CD4-positive, alpha-beta T cell (primary cell): ENCODE measurements at regions of chr17 and their contacts with region 1.

Region 1: GRCh38 chr17:81484195-81484979 is 28.2 kb downstream of the ACTG1 start:
- DNase-seq: peak; percentile 74 to 91 (median 86)
- ATAC-seq: peak; percentile 73
- H3K4me3 ChIP-seq: peak overlapping the region; percentile 39
- H3K4me3 Mint-ChIP-seq: no peak overlapping the region
- H3K27ac ChIP-seq: no peak overlapping the region
- H3K27ac Mint-ChIP-seq: no peak overlapping the region
- H3K4me1 ChIP-seq: peaks cover 55% of the 10 kb centered on the region
- H3K4me1 Mint-ChIP-seq: peaks cover 7% of the 10 kb centered on the region
- H3K27me3 ChIP-seq: peaks cover 25 to 31% of the 10 kb centered on the region in 2 experiments
- H3K27me3 Mint-ChIP-seq: peaks cover 24% of the 10 kb centered on the region
- CTCF ChIP-seq: peak; percentile 96

Region 2: DNA sequence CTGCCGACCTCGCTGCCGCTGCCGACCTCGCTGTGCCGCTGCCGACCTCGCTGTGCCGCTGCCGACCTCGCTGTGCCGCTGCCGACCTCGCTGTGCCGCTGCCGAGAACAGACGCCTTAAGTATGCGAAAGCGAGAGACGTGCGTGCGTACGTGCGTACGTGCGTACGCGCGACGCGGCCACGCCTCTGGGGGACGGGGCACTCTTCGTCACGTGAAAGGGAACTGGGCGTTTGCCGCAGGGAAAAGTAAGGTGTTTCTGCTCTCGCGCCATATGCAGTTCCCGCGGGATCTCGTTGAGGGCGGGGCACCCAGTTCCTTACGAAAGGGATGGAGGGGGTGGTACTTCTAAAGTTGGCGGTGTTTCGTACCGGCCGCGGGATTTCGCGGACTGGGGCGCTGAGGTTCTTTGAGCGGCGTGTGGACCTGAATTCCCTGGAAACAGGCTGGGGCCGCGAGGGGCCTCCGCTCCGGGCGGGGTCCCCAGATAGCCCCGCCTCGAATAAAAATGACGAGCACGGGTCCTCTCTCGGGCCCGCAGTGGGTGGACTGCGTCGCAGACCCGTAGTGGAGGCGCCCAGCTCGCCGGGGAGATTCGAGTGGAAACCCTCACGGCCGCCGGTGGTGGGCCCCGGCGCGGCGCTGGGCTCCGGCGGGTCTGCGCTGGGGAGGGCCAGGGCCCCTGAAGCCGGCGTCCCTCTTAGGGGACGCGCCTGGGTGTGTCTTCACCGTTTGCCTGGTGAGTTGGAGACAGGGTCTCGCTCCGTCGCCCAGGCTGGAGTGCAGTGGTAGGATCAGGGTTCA is 1337.2 kb before region 1 on chr17 and contains the start of gene EIF4A3:
- CTCF ChIA-PET with region 1: no interaction called
- POLR2A ChIA-PET with region 1: no interaction called
- intact Hi-C with region 1: loop called in 1 of 2 experiments (anchors 10 kb)
- DNase-seq: peak; percentile 91 to 100 (median 95)
- ATAC-seq: peak; percentile 90
- H3K4me3 ChIP-seq: peak within 1 kb of the TSS; percentile 95
- H3K4me3 Mint-ChIP-seq: peak within 1 kb of the TSS; percentile 99
- H3K27ac ChIP-seq: peak within 1 kb of the TSS; percentile 84 to 93
- H3K27ac Mint-ChIP-seq: peak within 1 kb of the TSS; percentile 95
- H3K4me1 ChIP-seq: peaks cover 45% of the 10 kb centered on the region
- H3K4me1 Mint-ChIP-seq: peaks cover 49% of the 10 kb centered on the region
- H3K27me3 ChIP-seq: no peaks in the 10 kb centered on the region
- H3K27me3 Mint-ChIP-seq: no peaks in the 10 kb centered on the region
- CTCF ChIP-seq: no peak
- total RNA-seq, gene EIF4A3: 79.6 to 79.7 TPM

Region 3: DNA sequence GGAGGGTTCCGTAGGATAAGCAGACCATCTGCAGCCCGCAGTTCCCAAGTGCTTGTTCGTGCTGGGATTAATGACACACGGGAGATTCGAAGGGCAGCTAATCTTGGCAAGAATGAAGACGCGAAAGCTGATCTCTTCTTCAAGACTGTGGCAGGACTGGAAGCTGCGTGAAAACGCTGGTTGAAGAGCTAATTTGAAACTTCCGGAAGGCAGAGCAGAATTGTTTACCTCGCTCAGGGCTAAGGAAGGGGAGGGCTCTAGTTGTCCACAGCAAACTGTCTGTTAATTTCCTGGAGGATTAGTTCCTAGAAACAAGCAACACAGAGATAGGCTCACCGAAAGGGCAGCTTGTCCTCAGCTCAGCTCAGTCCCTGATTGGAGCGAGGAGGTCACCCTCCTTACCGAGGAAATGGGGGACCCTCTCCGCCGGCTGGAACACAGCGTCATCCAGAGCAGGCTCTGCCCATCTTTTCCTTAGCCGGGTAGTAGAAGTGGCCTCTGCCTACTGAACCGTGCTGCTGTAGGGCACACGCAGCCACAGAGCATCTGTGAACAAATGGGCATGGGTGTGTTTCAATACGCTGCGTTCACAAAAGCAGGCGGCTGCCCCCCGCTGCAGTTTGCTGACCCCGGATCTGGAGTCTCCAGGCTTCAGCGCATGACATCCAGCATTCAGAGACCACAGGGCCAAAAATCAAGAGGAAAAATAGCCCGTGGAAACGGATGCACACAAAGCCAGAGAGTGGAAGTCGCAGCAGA is 466.2 kb before region 1 on chr17:
- CTCF ChIA-PET with region 1: no interaction called
- POLR2A ChIA-PET with region 1: no interaction called
- intact Hi-C with region 1: loop called in 1 of 2 experiments (anchors 10 kb)
- DNase-seq: peak in 12 of 14 experiments; percentile 22 to 73 (median 38)
- ATAC-seq: peak; percentile 88
- H3K4me3 ChIP-seq: peak overlapping the region; percentile 60
- H3K4me3 Mint-ChIP-seq: peak overlapping the region; percentile 84
- H3K27ac ChIP-seq: peak overlapping the region; percentile 56 to 81
- H3K27ac Mint-ChIP-seq: peak overlapping the region; percentile 93
- H3K4me1 ChIP-seq: peaks cover 34% of the 10 kb centered on the region
- H3K4me1 Mint-ChIP-seq: peaks cover 26% of the 10 kb centered on the region
- H3K27me3 ChIP-seq: no peaks in the 10 kb centered on the region
- H3K27me3 Mint-ChIP-seq: no peaks in the 10 kb centered on the region
- CTCF ChIP-seq: no peak

Region 4: DNA sequence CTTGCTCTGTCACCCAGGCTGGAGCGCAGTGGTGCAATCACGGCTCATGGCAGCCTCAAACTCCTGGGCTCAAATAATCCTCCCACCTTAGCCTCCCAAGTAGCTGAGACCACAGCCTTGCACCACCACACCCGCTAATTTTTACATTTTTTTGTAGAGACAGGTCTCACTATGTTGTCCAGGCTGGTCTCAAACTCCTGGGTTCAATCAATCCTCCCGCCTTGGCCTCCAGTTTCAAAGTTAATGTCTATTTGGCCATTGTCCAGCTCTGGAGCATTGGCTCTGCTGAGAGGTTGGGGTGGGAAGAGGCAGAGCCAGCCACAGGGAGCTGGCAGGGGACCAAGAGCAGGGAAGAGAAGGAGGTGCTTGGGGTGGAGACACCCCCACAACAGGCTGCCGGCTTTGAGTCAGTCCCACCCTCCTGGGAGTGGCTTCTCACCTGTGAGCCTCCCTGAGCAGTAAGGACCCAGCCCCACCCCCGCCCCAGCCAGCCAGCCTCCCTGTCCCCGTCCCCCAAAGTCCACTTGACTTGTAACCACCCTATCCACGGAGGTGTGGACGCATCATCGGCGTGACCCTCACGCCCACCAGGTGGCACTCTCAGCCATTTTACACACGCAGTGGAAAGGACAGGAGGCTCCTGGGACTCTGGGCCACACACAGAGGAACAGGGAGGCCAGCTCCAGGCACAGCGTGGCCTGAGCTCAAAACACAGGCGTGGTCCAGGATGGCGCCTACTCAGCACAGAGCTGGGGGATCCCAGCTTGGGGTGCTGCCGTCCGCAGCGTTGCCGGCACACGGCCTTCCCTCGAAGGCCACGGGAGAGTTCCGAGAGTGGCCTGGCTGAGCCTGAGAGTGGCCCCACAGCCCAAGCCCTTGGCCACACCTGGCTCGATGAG is 341.8 kb before region 1 on chr17:
- CTCF ChIA-PET with region 1: no interaction called
- POLR2A ChIA-PET with region 1: no interaction called
- intact Hi-C with region 1: loop called in 1 of 2 experiments (anchors 1 kb)
- DNase-seq: peak; percentile 35 to 78 (median 56)
- ATAC-seq: peak; percentile 73
- H3K4me3 ChIP-seq: no peak overlapping the region
- H3K4me3 Mint-ChIP-seq: no peak overlapping the region
- H3K27ac ChIP-seq: no peak overlapping the region
- H3K27ac Mint-ChIP-seq: no peak overlapping the region
- H3K4me1 ChIP-seq: no peaks in the 10 kb centered on the region
- H3K4me1 Mint-ChIP-seq: no peaks in the 10 kb centered on the region
- H3K27me3 ChIP-seq: peaks cover 0 to 3% of the 10 kb centered on the region in 2 experiments
- H3K27me3 Mint-ChIP-seq: no peaks in the 10 kb centered on the region
- CTCF ChIP-seq: peak; percentile 53

Region 5: DNA sequence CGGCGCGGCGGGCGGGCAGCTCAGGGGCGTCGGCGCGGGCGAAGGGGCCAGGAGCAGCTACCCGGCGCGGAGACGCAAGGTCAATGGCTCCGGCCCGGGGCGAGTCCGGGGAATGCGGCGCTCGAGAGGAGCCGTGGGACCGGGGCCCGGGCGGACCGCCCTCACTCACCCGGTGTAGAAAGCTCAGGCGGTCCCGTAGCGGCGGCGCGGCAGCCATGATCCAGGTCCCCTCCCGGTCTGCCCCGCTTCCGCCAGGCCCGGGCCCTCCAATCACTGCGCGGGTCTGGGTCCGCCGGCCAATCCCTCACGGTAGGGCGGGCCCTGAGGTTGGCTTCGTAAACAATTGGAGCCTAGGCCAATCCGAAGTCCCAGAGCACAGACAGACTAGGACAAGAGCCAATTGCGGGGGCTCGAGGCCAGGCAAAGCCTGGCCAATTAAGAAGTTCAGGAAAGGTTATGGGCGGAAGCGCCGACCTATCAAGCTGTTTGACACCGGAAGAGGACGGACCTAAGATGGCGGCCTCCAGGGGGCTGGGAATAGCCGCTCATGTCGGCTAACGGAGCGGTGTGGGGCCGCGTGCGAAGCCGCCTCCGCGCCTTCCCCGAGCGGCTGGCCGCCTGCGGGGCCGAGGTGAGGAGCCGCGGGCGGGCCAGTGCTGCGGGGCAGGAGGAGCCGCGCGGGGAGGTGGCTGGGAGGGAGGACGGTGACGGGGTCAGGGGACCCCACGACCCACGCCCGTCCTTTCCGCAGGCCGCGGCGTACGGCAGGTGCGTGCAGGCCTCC is 245.4 kb before region 1 on chr17 and contains the starts of genes NDUFAF8 and TEPSIN:
- CTCF ChIA-PET with region 1: no interaction called
- POLR2A ChIA-PET with region 1: interaction called, 6 read pairs
- intact Hi-C with region 1: loop called in 1 of 2 experiments (anchors 5 kb)
- DNase-seq: peak; percentile 89 to 99 (median 93)
- ATAC-seq: peak; percentile 95
- H3K4me3 ChIP-seq: peak within 1 kb of the TSS; percentile 90
- H3K4me3 Mint-ChIP-seq: peak within 1 kb of the TSS; percentile 98
- H3K27ac ChIP-seq: peak within 1 kb of the TSS in 1 of 2 donors; percentile 47
- H3K27ac Mint-ChIP-seq: peak within 1 kb of the TSS; percentile 92
- H3K4me1 ChIP-seq: peaks cover 58% of the 10 kb centered on the region
- H3K4me1 Mint-ChIP-seq: peaks cover 43% of the 10 kb centered on the region
- H3K27me3 ChIP-seq: no peaks in the 10 kb centered on the region
- H3K27me3 Mint-ChIP-seq: no peaks in the 10 kb centered on the region
- CTCF ChIP-seq: no peak
- total RNA-seq, gene NDUFAF8: 34.6 to 38.6 TPM
- total RNA-seq, gene TEPSIN: 68.2 to 74.4 TPM

Region 6: DNA sequence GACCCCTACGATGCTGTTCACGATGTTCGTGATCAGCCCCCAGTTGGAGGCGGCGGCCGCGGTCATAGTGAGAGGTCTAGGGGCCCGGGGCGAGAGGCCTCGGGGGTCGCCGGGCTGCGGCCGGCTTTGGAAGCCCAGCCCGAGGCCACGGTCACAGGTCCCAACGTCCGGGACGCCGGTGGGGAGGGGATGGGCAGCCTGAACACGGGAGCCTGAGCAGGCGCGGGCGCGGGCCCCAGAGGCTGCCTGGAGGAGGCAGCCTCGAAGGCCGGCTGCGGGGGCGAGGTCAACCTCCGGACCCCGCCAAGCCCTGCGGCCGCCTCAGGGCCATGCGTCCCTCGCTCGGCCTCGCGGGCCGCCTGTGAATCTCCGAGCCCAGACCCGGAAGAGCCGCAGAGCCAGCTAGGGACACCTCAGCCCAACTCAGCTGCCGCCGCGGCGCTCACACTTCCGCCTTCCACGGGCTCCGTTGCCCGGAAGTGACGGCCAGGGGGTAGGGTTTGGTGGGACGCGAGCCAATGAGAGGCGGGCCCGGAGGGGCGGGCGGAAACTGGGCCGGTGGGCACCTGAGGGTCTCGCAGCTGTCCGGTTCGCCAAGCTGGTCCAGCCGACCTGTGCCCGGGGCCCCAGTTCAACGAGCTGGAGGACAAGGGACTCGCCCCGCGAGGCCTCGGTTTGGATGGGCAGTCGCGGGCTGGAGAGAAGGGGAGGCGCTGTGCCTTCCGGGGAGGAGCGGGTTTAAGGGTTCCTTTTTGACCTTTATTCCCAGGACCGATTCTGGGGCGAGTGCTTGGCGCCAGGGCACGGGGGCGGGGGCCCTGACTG is 189.3 kb before region 1 on chr17 and contains the start of gene SLC38A10:
- CTCF ChIA-PET with region 1: interaction called, 14 read pairs
- POLR2A ChIA-PET with region 1: interaction called, 7 read pairs
- intact Hi-C with region 1: loop called in 1 of 2 experiments (anchors 2 kb)
- DNase-seq: peak; percentile 82 to 94 (median 90)
- ATAC-seq: peak; percentile 79
- H3K4me3 ChIP-seq: peak within 1 kb of the TSS; percentile 94
- H3K4me3 Mint-ChIP-seq: peak within 1 kb of the TSS; percentile 100
- H3K27ac ChIP-seq: peak within 1 kb of the TSS; percentile 85 to 94
- H3K27ac Mint-ChIP-seq: peak within 1 kb of the TSS; percentile 100
- H3K4me1 ChIP-seq: peaks cover 50% of the 10 kb centered on the region
- H3K4me1 Mint-ChIP-seq: peaks cover 44% of the 10 kb centered on the region
- H3K27me3 ChIP-seq: no peaks in the 10 kb centered on the region
- H3K27me3 Mint-ChIP-seq: no peaks in the 10 kb centered on the region
- CTCF ChIP-seq: no peak
- total RNA-seq, gene SLC38A10: 22.8 to 26.4 TPM

Region 7: GRCh38 chr17:81512560-81513371 is 28.4 kb after region 1 on chr17 and contains the start of gene ACTG1:
- CTCF ChIA-PET with region 1: interaction called, 10 read pairs
- POLR2A ChIA-PET with region 1: interaction called, 18 read pairs
- intact Hi-C with region 1: loop called in 1 of 2 experiments (anchors 2 kb)
- DNase-seq: peak; percentile 84 to 96 (median 92)
- ATAC-seq: peak; percentile 66
- H3K4me3 ChIP-seq: peak within 1 kb of the TSS; percentile 98
- H3K4me3 Mint-ChIP-seq: peak within 1 kb of the TSS; percentile 99
- H3K27ac ChIP-seq: peak within 1 kb of the TSS; percentile 72 to 87
- H3K27ac Mint-ChIP-seq: peak within 1 kb of the TSS; percentile 90
- H3K4me1 ChIP-seq: peaks cover 72% of the 10 kb centered on the region
- H3K4me1 Mint-ChIP-seq: peaks cover 57% of the 10 kb centered on the region
- H3K27me3 ChIP-seq: no peaks in the 10 kb centered on the region
- H3K27me3 Mint-ChIP-seq: no peaks in the 10 kb centered on the region
- CTCF ChIP-seq: no peak
- total RNA-seq, gene ACTG1: 1,296 to 1,318 TPM